Thyroid gland (tissue), 4 donors: ENCODE measurements at regions of chr1 and their contacts with region 1.

Region 1: DNA sequence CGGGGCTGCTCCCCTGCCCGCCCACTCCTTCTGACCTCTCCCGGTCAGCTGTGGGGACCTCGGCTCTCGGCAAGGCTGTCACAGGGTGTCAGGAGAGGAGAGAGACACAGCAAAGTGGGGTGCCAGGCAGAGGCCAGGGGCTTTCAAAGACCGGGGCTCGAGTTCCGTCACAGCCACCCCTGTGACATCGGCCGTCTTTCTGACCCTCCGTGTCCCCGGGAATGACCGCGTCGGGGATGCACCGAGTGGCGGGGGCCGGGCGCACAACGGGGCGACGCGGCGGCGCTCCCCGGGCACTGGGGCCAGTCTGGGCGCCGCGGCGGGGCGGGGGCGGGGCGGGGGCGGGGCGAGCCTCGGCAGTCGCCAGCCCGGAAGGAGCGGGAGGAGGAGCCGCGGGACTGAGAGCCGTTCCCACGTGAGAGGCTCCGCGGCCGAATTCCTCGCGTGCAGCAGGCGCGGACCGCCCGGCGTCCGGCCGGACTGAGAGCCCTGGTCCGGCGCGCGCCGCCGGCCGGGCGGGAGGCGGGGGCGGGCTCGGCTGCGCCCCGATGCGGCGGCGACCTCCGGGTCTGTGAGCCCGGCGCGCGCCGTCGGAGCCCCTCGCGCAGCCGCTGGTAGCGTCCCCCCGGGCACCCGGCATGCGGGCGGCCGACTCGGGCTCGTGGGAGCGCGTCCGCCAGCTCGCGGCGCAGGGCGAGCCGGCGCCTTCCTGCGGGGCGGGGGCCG is 229.7 kb upstream of the TMEM51 start:
- DNase-seq: peak; percentile 92 to 93
- H3K4me3 ChIP-seq: no peak overlapping the region
- H3K27ac ChIP-seq: peak overlapping the region; percentile 83 to 87 (median 86)
- H3K4me1 ChIP-seq: peaks cover 13 to 18% of the 10 kb centered on the region in 2 donors
- H3K27me3 ChIP-seq: no peaks in the 10 kb centered on the region
- CTCF ChIP-seq: no peak
- POLR2A ChIP-seq: peak in 1 of 2 donors; percentile 73

Region 2: GRCh38 chr1:14815175-14815877 is 108.6 kb before region 1 on chr1:
- intact Hi-C with region 1: no loop called
- DNase-seq: peak; percentile 79 to 81
- H3K4me3 ChIP-seq: no peak overlapping the region
- H3K27ac ChIP-seq: peak overlapping the region; percentile 46 to 65 (median 63)
- H3K4me1 ChIP-seq: peaks cover 15 to 18% of the 10 kb centered on the region in 2 donors
- H3K27me3 ChIP-seq: no peaks in the 10 kb centered on the region
- CTCF ChIP-seq: no peak
- POLR2A ChIP-seq: no peak

Region 3: DNA sequence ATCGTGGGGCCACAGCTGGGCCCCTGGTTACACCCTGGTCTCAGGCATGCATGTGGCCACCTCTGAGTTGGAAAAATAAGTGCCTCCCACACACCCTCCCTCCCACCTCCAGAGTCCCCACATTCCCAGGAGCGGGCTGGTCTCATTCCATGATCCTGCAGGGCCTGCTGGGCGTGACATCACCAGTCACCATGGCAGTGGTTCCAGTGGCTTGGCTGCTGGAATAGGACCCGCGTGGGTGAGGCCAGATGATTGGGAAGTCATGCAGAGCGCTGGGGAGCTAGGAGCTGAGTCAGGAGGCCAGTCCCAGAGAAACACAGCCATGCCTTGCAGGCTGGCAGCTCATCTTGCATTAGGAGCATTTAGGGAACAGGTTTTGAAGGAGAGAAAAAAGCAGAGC is 104.2 kb after region 1 on chr1:
- intact Hi-C with region 1: loop called (anchors 5 kb)
- DNase-seq: peak; percentile 97 to 99
- H3K4me3 ChIP-seq: no peak overlapping the region
- H3K27ac ChIP-seq: peak overlapping the region; percentile 90 to 98 (median 94)
- H3K4me1 ChIP-seq: peaks cover 40 to 52% of the 10 kb centered on the region in 2 donors
- H3K27me3 ChIP-seq: no peaks in the 10 kb centered on the region
- CTCF ChIP-seq: no peak
- POLR2A ChIP-seq: peak in 1 of 2 donors; percentile 55